ENCODE measurements at regions of chr10 and their contacts with region 1.

Region 1: GRCh38 chr10:73625884-73626752 is 15.2 kb downstream of the MYOZ1 start:
- DNase-seq: peak; percentile 95
- ATAC-seq: peak; percentile 96
- H3K4me3 ChIP-seq: peak overlapping the region; percentile 72 to 98
- H3K27ac ChIP-seq: peak overlapping the region; percentile 78
- H3K4me1 ChIP-seq: peaks cover 0 to 9% of the 10 kb centered on the region in 2 experiments; a peak in 2 of 4 replicates
- H3K27me3 ChIP-seq: no peaks in the 10 kb centered on the region
- CTCF ChIP-seq: no peak
- POLR2A ChIP-seq: peak; percentile 88
- RAD21 ChIP-seq: no peak

Region 2: DNA sequence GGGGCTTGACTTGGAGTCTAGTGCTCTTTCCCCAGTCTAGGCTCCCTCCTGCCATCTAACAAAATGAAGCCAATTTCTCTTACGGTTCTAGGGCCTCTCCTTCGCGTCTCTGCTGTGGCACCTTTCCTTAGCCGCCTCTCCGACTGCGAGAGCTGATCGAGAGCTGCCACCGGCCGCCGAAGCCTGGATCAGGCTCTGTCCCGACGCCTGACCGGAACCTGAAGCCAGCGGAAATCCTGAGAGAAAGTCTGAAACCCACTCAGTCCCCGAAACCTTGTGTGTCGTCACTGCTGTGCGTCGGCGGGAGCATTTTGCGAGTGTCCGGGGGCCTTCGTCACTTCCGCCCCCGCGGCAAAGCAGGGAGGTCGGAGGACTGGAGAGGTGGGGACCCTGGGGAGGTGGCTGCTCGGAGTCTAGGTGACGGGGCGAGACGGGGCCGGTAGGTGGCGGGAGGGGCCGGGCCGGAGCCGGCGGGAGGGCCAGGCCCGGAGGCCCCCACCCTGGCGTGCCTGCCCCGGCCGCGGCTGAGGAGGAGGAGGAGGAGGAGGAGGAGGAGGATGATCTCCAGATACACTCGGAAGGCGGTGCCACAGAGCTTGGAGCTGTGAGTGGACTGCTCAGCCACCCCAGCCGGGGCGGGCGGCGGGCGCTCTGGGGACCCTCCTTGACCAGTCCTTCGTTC is 458.2 kb before region 1 on chr10 and contains the starts of genes ECD and FAM149B1:
- CTCF ChIA-PET with region 1: no interaction called
- POLR2A ChIA-PET with region 1: no interaction called
- RAD21 ChIA-PET with region 1: no interaction called
- intact Hi-C with region 1: no loop called
- DNase-seq: peak; percentile 90
- ATAC-seq: peak; percentile 95
- H3K4me3 ChIP-seq: peak within 1 kb of the TSS; percentile 73 to 99
- H3K27ac ChIP-seq: peak within 1 kb of the TSS; percentile 75
- H3K4me1 ChIP-seq: peaks cover 0 to 10% of the 10 kb centered on the region in 2 experiments; a peak in 1 of 4 replicates
- H3K27me3 ChIP-seq: no peaks in the 10 kb centered on the region
- CTCF ChIP-seq: 0 out of 6 replicates have a peak, but pooled peaks of 1 of the 3 experiments have one; percentile 7
- POLR2A ChIP-seq: peak; percentile 86
- RAD21 ChIP-seq: no peak
- total RNA-seq, gene ECD: 25.4 TPM
- total RNA-seq, gene FAM149B1: 17.5 TPM

Region 3: GRCh38 chr10:73529089-73529832 is 96.9 kb before region 1 on chr10:
- CTCF ChIA-PET with region 1: no interaction called
- POLR2A ChIA-PET with region 1: no interaction called
- RAD21 ChIA-PET with region 1: no interaction called
- intact Hi-C with region 1: loop called (anchors 1 kb)
- DNase-seq: peak; percentile 56
- ATAC-seq: peak; percentile 96
- H3K4me3 ChIP-seq: no peak overlapping the region
- H3K27ac ChIP-seq: no peak overlapping the region
- H3K4me1 ChIP-seq: no peaks in the 10 kb centered on the region
- H3K27me3 ChIP-seq: no peaks in the 10 kb centered on the region
- CTCF ChIP-seq: peak; percentile 72 to 94 (median 83)
- POLR2A ChIP-seq: no peak
- RAD21 ChIP-seq: peak; percentile 98

Region 4: GRCh38 chr10:73586583-73586984 is 39.5 kb before region 1 on chr10:
- CTCF ChIA-PET with region 1: no interaction called
- POLR2A ChIA-PET with region 1: no interaction called
- RAD21 ChIA-PET with region 1: no interaction called
- intact Hi-C with region 1: no loop called
- DNase-seq: no peak
- ATAC-seq: no peak
- H3K4me3 ChIP-seq: no peak overlapping the region
- H3K27ac ChIP-seq: no peak overlapping the region
- H3K4me1 ChIP-seq: peaks cover 6 to 11% of the 10 kb centered on the region in 2 experiments; a peak in 3 of 4 replicates
- H3K27me3 ChIP-seq: no peaks in the 10 kb centered on the region
- CTCF ChIP-seq: no peak
- POLR2A ChIP-seq: no peak
- RAD21 ChIP-seq: no peak

Region 5: GRCh38 chr10:73601486-73601921 is 24.6 kb before region 1 on chr10:
- CTCF ChIA-PET with region 1: interaction called, 3 read pairs
- POLR2A ChIA-PET with region 1: interaction called, 10 read pairs
- RAD21 ChIA-PET with region 1: no interaction called
- intact Hi-C with region 1: no loop called
- DNase-seq: no peak
- ATAC-seq: peak; percentile 80
- H3K4me3 ChIP-seq: no peak overlapping the region
- H3K27ac ChIP-seq: no peak overlapping the region
- H3K4me1 ChIP-seq: peaks cover 11 to 13% of the 10 kb centered on the region in 2 experiments
- H3K27me3 ChIP-seq: no peaks in the 10 kb centered on the region
- CTCF ChIP-seq: no peak
- POLR2A ChIP-seq: no peak
- RAD21 ChIP-seq: no peak

Region 6: DNA sequence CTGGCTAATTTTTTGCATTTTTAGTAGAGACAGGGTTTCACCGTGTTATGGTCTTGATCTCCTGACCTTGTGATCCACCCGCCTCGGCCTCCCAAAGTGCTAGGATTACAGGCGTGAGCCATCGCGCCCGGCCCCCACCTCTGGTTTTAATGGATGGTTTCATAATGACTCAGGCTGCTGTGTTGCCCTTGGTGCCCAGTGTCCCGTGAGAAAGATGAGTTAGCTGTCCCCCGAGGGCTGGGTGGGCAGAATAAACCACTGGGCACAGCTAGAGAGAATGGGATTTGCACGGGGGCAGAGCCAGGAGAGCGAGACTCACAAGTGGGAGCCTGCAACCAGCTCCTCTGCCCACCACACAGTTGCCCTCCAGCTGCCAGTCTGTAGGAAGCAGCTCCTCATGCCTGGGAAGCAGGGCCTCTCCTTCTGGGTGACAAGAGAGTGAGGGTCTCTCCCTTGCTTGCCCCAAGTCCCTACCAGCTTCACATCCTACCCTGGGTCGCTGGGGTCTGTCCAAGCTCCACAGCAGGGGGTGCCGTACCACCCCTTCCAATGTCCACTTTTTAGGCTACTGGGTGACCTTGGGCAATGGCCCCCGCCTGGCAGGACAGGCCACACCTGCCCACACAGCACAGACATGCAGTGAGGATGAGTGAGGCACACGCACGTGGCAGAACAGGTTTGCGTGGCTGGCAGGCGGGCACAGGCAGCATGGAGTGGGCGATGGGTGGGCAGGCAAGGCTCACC is 201.4 kb after region 1 on chr10:
- CTCF ChIA-PET with region 1: no interaction called
- POLR2A ChIA-PET with region 1: no interaction called
- RAD21 ChIA-PET with region 1: no interaction called
- intact Hi-C with region 1: no loop called
- DNase-seq: no peak
- ATAC-seq: no peak
- H3K4me3 ChIP-seq: no peak overlapping the region
- H3K27ac ChIP-seq: no peak overlapping the region
- H3K4me1 ChIP-seq: no peaks in the 10 kb centered on the region; a peak in 1 of 4 replicates
- H3K27me3 ChIP-seq: no peaks in the 10 kb centered on the region
- CTCF ChIP-seq: no peak
- POLR2A ChIP-seq: no peak
- RAD21 ChIP-seq: no peak

Region 7: DNA sequence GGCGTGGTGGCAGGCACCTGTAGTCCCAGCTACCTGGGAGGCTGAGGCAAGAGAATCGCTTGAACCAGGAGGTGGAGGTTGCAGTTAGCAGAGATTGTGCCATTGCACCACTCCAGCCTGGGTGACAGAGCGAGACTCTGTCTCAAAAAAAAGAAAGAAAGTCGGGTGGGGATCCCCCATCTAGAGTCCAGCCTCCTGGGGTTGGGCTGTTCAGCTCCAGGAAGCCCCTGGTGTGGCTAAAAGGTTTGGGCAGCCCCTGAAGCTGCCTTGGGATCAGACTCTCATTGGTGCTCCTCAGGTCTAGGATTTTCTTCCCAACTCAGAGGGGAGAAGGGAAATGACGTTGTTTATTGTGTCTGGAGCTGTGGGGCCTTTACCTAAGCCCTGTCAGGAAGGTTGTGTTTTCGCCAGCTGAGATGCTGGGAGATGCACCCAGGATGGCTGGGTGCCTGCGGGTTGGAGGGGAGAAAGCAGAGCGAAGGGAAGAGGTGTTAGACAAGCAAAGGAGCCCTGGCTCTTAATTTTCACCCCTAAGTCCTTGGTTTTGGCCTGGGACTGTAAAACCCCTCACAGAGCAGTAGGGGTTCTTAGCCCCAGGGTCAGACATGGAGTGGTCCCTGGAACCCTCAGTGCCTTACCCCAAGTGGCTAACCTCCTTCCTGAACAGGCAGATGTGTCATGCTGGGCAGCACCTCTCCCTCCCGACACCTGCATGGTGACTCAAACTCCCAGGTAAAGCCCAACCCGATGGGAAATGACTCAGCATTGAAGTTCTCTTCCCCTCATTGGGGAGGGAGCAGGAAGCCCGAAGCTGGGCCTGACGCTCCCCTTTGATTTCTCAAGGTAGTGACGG is 305.9 kb after region 1 on chr10:
- CTCF ChIA-PET with region 1: no interaction called
- POLR2A ChIA-PET with region 1: no interaction called
- RAD21 ChIA-PET with region 1: no interaction called
- intact Hi-C with region 1: no loop called
- DNase-seq: peak; percentile 91
- ATAC-seq: peak; percentile 94
- H3K4me3 ChIP-seq: peak overlapping the region; percentile 25 to 49
- H3K27ac ChIP-seq: peak overlapping the region; percentile 99
- H3K4me1 ChIP-seq: peaks cover 35 to 60% of the 10 kb centered on the region in 2 experiments
- H3K27me3 ChIP-seq: no peaks in the 10 kb centered on the region
- CTCF ChIP-seq: no peak
- POLR2A ChIP-seq: no peak
- RAD21 ChIP-seq: no peak; the same call in none of the 2 replicates

Measured in HCT116 (cell line).